ENCODE measurements at regions of chr2 and their contacts with region 1.

Region 1: DNA sequence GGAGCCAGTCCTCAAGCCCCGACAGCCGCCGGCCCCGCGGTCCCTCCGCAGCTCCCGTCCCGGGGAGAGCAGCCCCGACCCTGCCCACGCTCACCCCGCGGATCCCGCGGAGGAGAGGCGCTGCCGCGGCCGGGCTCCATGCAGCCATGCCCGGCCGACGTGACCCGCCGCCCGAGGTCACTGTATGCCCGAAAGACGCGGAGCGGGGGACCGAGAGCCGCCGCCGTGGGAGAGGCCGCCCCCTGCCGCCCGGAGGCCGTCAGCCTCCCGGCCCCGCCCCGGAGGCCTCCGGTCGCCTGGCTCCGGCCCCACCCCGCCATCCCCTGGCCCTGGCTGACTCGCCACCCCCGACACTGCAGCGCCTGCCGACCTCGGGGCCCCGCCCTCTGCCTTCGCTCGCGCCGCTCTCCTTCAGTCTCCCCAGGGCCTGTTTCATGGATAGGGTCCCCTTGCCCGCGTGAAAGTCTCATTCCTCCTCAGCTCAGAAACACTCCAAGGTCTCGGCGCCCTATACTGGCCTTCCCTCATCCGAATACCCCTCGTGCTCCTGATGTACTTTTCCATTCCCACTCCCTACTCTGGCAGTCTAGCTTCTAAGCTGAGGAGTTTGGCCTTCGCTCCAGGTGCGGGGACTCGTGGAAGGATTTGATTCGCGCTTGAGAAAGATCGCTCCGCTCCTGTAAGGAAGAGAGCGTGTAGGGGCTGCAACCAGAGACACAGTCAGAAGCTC is at the start of gene BOLA3:
- DNase-seq: peak; percentile 91
- H3K4me3 ChIP-seq: peak within 1 kb of the TSS; percentile 68 to 95 (median 84)
- H3K27ac ChIP-seq: peak within 1 kb of the TSS; percentile 76 to 83 (median 78)
- H3K4me1 ChIP-seq: peaks cover 0 to 31% (median 23%) of the 10 kb centered on the region in 4 donors
- H3K27me3 ChIP-seq: no peaks in the 10 kb centered on the region
- CTCF ChIP-seq: peak in 1 of 4 experiments; percentile 65
- EP300 ChIP-seq: no peak
- POLR2A ChIP-seq: no peak
- total RNA-seq, gene BOLA3: 26.1 to 44.4 (median 34.3) TPM

Region 2: DNA sequence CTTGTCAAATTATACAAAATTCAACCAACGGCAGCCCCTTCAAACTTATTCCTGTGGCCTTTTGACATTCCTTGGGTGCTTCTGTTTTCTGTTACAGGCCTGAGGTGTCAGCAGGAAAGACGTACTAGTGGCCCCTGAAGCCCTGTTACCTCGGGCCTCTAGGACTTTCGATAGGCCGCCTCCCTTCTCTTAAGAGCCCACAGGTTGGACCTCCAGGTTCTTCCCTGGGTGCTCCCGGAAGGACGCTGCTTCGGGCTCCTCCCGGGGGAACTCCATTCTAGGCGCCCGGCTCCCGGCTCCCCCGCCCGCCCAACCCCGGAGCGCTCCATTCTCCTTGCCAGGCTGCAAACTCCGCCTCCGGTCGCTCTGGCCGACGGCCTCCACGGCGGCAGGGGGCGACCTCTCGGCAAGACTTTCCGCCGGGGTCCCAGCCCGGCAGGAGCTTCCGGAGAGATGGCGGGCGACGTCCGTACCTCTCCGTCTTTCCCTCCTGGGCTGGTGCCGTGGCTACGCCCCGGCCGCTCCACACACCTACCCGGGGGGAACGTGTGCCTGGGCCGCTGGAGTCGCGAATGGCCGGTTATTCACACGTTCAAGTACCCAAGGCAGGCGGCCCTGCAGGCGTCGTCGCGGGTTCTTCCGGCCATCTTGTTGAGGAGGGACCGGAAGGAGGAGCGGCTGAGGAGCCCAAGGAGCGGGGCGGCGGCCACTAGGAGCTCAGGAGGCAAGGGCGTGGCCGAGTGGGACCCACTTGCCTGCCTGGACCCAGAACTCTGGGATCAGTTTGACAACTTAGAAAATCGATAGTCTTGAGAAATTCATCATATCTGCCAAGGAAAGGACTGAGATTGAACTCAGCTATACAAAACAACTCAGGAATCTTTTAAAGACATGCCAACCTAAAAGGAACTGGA is 27.7 kb before region 1 on chr2:
- intact Hi-C with region 1: loop called (anchors 1 kb)
- DNase-seq: peak; percentile 90
- H3K4me3 ChIP-seq: peak overlapping the region; percentile 72 to 79 (median 76)
- H3K27ac ChIP-seq: peak overlapping the region; percentile 87 to 90 (median 89)
- H3K4me1 ChIP-seq: peaks cover 0 to 10% (median 3%) of the 10 kb centered on the region in 4 donors
- H3K27me3 ChIP-seq: no peaks in the 10 kb centered on the region
- CTCF ChIP-seq: peak in 2 of 4 experiments; percentile 31 to 72
- EP300 ChIP-seq: no peak
- POLR2A ChIP-seq: no peak

Region 3: DNA sequence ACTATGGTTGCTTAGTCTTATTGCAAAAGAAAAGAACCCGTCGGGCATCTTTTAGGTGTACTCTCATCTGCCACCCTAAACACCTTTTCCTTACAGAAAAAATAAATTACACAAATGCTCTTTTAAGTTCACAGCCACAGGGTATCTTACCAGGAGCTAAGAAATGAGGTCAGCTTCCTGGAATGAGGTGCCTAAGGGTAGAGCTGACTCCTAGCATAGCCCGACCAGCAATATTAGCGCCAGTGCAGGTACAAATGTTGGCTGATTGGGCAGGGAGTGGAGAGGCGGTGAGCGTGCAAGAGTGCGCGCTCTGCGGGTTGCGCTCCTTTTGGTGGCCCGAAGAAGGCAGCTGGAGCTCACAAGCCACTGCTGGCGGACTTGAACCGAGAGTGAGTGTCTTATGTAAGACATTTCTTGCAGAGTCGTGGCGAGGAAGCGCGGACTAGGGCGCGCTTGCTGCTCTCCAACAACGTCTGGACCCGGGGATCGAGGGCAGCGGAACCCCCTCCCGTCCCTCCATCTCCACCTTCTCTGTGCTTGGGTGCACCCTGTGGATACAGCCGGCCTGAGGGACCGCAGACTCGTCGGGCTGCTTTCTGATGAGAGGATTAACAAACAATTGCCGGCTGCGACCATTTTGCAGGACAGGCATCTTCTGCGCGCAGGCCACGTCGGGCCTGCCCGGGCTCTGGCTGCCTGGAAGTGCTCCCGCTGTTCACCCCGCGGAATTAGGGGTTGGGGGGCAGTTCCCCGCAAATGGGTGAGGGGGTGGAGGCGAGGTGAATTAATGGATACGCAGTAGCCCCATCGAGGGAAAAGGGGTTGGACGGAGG is 17.5 kb before region 1 on chr2:
- intact Hi-C with region 1: no loop called
- DNase-seq: no peak
- H3K4me3 ChIP-seq: no peak overlapping the region
- H3K27ac ChIP-seq: no peak overlapping the region
- H3K4me1 ChIP-seq: no peaks in the 10 kb centered on the region
- H3K27me3 ChIP-seq: peaks cover 0 to 26% (median 15%) of the 10 kb centered on the region in 3 donors
- CTCF ChIP-seq: no peak
- EP300 ChIP-seq: no peak
- POLR2A ChIP-seq: no peak

Region 4: DNA sequence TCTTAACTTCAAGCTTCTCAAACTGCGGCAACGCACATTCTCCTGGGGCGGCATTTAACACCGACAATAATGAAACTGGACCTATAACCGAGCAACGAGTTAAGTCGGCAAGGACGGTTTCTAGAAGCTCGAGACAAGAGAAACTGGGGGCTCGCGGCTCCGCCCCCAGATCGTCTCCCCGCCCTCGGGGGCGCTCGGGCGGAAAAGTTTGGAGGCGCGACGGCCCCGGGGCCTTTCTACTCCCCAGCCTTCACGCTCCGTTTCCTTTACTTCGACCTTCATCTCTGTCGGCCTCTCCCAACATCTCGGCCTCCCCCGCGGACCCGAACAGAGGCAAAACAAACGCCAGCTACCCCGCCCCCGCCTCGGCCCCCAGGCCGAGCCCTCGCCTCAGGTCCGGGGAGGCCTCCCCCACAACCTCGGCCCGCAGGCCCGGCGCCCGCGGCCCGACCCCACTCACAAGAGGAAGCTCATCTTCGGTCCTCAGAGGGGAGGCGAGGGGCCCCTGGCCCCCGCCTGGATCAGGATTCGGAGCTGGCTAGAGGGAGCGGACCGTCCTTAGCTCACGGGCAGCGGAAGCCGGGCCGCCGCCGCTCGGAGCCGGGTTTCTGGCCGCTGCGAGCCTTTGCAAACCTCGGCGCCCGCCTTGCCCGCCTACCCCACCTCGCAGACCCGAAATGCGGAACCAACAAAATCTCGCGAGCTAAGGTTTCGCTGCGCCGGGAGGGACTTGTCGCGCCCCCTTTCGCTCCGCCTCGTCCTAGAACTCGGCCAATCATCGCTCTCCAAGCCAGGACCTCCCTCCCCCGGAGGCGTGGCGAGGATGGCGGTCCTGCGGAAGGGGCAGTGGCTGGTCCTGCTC is 30.5 kb after region 1 on chr2 and contains the start of gene MOB1A:
- intact Hi-C with region 1: loop called (anchors 2 kb)
- DNase-seq: peak; percentile 98
- H3K4me3 ChIP-seq: peak within 1 kb of the TSS; percentile 71 to 98 (median 86)
- H3K27ac ChIP-seq: peak within 1 kb of the TSS; percentile 96 to 99 (median 97)
- H3K4me1 ChIP-seq: peaks cover 0 to 40% (median 35%) of the 10 kb centered on the region in 4 donors
- H3K27me3 ChIP-seq: no peaks in the 10 kb centered on the region
- CTCF ChIP-seq: no peak
- EP300 ChIP-seq: no peak
- POLR2A ChIP-seq: peak; percentile 82 to 87
- total RNA-seq, gene MOB1A: 80.0 to 108 (median 95.6) TPM

Measured in sigmoid colon (tissue), 7 donors.